PC-3 (cell line): ENCODE measurements at regions of chr19 and their contacts with region 1.

Region 1: GRCh38 chr19:10000171-10000826 is 10.0 kb downstream of the COL5A3 start:
- DNase-seq: peak; percentile 81
- ATAC-seq: peak; percentile 67
- H3K4me3 ChIP-seq: no peak overlapping the region
- H3K27ac ChIP-seq: no peak overlapping the region
- H3K4me1 ChIP-seq: peaks cover 3% of the 10 kb centered on the region; the same call in 1 of the 2 replicates
- H3K27me3 ChIP-seq: peaks cover 14% of the 10 kb centered on the region
- CTCF ChIP-seq: peak; percentile 81

Region 2: DNA sequence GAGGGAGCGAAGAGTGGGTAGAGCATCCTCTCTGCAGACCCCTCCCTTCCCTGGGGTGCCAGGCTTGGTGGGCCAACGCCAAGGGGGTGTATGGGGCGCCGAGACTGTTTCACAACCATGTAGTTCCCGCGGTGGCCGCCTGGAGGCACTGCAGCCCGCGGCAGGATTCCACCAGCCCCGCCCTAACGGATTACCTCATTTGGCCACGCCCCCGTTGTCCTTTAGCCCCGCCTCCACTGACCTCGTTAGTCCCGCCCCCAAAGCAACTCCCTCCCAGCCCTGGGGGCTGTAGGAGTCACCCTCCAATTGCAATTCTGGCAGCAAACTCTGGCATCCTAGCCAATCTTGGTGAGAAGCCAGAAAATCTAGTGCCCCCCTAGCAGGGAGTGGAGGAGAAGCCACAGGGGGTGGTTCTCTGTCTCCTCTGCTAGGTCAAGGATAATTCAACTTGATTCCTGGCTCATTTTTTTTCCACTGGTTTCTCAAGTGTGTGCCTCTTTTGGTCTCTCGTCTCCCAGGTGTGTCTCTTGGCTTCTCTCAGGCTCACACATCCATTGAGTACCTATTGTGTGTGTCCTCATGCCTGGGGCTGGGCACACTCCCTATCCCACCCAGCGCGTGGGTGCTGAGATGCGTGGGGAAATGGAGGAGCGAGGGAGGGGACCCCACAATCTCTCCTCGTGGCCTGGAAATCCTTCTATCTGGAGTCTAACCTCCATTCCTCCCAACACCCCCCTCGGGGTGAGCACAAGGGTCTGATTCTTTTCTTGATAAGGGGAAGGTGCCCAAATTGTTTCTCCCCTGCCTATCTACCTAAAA is 66.0 kb before region 1 on chr19:
- CTCF ChIA-PET with region 1: interaction called, 10 read pairs
- POLR2A ChIA-PET with region 1: no interaction called
- intact Hi-C with region 1: loop called (anchors 1 kb)
- DNase-seq: peak; percentile 89
- ATAC-seq: peak; percentile 59
- H3K4me3 ChIP-seq: no peak overlapping the region
- H3K27ac ChIP-seq: no peak overlapping the region
- H3K4me1 ChIP-seq: peaks cover 5% of the 10 kb centered on the region
- H3K27me3 ChIP-seq: peaks cover 14% of the 10 kb centered on the region
- CTCF ChIP-seq: peak; percentile 98

Region 3: DNA sequence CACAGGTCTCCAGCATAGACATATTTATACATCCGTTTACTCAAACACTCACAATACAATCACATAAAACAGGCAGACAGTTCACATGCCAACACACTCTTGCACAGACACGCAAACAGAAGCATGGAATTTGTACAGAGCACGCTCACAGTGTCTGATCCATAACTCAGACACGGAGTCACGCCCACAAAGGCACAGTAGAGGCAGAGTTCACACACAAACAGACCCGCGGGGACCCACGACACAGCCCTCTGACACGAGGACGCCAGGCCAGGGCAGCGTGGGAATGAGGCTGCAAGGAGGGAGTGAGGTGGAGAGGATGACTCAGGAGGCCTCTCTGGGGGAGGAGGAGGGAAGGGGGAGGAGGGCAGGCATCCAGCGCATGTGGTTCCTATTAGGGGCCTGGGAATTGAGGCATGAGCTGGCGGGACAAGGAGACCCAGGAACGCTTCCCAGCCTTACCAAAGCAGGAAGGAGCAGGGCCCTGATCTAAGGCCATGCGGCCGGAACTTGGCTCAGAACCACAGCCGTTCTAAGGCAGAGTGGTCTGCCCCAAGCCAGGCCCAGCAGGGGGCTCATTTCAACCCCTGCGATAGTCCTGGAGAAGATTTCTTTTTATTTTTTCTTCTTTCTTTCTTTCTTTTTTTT is 54.9 kb before region 1 on chr19:
- CTCF ChIA-PET with region 1: interaction called, 9 read pairs
- POLR2A ChIA-PET with region 1: no interaction called
- intact Hi-C with region 1: loop called (anchors 5 kb)
- DNase-seq: peak; percentile 87
- ATAC-seq: peak; percentile 92
- H3K4me3 ChIP-seq: peak overlapping the region; percentile 24; the same call in 1 of the 2 replicates
- H3K27ac ChIP-seq: peak overlapping the region; percentile 88
- H3K4me1 ChIP-seq: peaks cover 17% of the 10 kb centered on the region
- H3K27me3 ChIP-seq: no peaks in the 10 kb centered on the region
- CTCF ChIP-seq: 0 out of 2 replicates have a peak, but pooled peaks have one; percentile 16

Region 4: GRCh38 chr19:9986787-9987281 is 13.5 kb before region 1 on chr19:
- CTCF ChIA-PET with region 1: interaction called, 10 read pairs
- POLR2A ChIA-PET with region 1: interaction called, 11 read pairs
- intact Hi-C with region 1: no loop called
- DNase-seq: no peak
- ATAC-seq: no peak
- H3K4me3 ChIP-seq: no peak overlapping the region
- H3K27ac ChIP-seq: no peak overlapping the region
- H3K4me1 ChIP-seq: no peaks in the 10 kb centered on the region
- H3K27me3 ChIP-seq: peaks cover 18% of the 10 kb centered on the region
- CTCF ChIP-seq: no peak

Region 5: GRCh38 chr19:10027158-10027693 is 26.9 kb after region 1 on chr19:
- CTCF ChIA-PET with region 1: interaction called, 13 read pairs
- POLR2A ChIA-PET with region 1: no interaction called
- intact Hi-C with region 1: loop called (anchors 1 kb)
- DNase-seq: peak; percentile 76
- ATAC-seq: peak; percentile 61
- H3K4me3 ChIP-seq: peak overlapping the region; percentile 43; the same call in 1 of the 2 replicates
- H3K27ac ChIP-seq: peak overlapping the region; percentile 12; the same call in 1 of the 2 replicates
- H3K4me1 ChIP-seq: peaks cover 9% of the 10 kb centered on the region
- H3K27me3 ChIP-seq: peaks cover 20% of the 10 kb centered on the region
- CTCF ChIP-seq: no peak

Region 6: DNA sequence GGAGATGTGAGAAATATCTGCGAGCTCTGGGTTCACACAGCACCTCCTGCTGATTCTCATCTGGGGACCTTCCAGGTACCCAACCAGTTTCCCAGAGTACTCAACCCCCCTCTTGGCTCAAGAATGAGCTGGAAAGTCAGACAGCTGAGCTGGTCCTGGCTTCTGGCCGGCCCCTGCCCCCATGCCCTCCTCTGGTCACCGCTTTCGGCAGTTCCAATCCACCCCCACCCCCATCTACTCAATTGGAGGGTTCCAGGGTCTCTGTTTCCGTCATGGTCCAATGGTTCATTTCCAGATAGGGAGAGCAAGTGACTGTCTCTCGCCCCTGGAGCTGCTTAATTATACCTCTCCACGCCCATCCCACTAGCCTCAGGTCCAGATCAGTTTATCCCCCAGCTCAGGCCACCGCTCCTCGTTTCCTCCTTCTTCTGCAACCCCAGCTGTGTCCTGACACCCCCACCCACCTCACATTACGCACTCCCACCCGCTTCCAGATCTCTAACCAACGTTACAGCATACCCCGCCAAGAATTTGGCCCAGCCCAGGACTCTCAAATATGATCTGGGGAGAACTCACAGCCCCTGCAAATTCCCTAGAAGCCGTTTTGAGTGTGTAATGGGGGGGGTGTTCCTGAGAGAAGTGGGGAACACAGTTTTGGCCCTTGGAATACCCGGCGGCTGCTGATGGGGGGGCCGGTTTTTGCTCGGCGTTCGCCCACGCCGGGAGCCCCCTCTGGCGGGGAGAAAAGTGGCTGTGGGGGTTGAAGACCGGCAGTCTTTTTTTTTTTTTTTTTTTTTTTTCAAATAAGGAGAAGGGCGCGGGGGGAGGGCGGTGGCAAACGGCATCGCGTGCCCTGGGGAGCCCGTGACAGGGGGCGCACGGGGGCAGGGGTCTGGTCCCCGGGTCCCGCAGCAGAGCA is 418.2 kb after region 1 on chr19:
- CTCF ChIA-PET with region 1: interaction called, 14 read pairs
- POLR2A ChIA-PET with region 1: no interaction called
- intact Hi-C with region 1: no loop called
- DNase-seq: no peak
- ATAC-seq: 0 out of 2 replicates have a peak, but pooled peaks have one; percentile 3
- H3K4me3 ChIP-seq: peak overlapping the region; percentile 62
- H3K27ac ChIP-seq: no peak overlapping the region
- H3K4me1 ChIP-seq: peaks cover 28% of the 10 kb centered on the region
- H3K27me3 ChIP-seq: peaks cover 53% of the 10 kb centered on the region
- CTCF ChIP-seq: no peak; the same call in 1 of the 2 replicates